Tibial artery (tissue), 4 donors: ENCODE measurements at regions of chr2 and their contacts with region 1.

Region 1: GRCh38 chr2:221573430-221574230 is 1.5 kb upstream of the EPHA4 start:
- DNase-seq: peak; percentile 84 to 91
- H3K4me3 ChIP-seq: peak overlapping the region; percentile 70 to 89
- H3K27ac ChIP-seq: peak overlapping the region; percentile 81 to 83
- H3K4me1 ChIP-seq: peaks cover 0 to 30% (median 17%) of the 10 kb centered on the region in 4 donors
- H3K27me3 ChIP-seq: peaks cover 0 to 10% of the 10 kb centered on the region in 2 donors
- CTCF ChIP-seq: peak; percentile 92 to 98

Region 2: DNA sequence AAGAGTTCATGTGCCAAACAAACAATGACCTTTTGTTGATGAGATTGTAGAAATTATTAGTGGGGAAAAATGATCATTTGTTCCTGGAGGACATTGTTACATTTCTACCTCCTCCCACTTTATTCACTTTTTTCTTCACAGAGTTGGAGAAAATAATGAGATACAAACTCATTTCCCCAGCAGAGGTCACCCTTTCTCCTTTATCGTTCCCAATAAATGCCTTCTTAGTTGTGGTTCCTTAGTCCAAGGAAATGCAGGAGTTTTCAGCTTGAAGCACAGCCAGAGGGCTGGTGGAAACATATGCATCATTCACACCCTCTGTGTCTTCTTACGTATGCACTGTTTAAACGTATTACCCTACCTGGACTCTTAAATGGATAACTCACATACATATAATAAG is 1837.4 kb before region 1 on chr2:
- intact Hi-C with region 1: loop called (anchors 10 kb)
- DNase-seq: no peak
- H3K4me3 ChIP-seq: no peak overlapping the region
- H3K27ac ChIP-seq: no peak overlapping the region
- H3K4me1 ChIP-seq: no peaks in the 10 kb centered on the region
- H3K27me3 ChIP-seq: peaks cover 0 to 6% of the 10 kb centered on the region in 2 donors
- CTCF ChIP-seq: peak; percentile 51 to 53

Region 3: GRCh38 chr2:220687231-220687843 is 886.3 kb before region 1 on chr2:
- intact Hi-C with region 1: loop called (anchors 2 kb)
- DNase-seq: peak; percentile 76 to 79
- H3K4me3 ChIP-seq: no peak overlapping the region
- H3K27ac ChIP-seq: no peak overlapping the region
- H3K4me1 ChIP-seq: no peaks in the 10 kb centered on the region
- H3K27me3 ChIP-seq: peaks cover 0 to 2% of the 10 kb centered on the region in 2 donors
- CTCF ChIP-seq: peak; percentile 85 to 89